T-cell (primary cell): ENCODE measurements at regions of chr21 and their contacts with region 1.

Region 1: DNA sequence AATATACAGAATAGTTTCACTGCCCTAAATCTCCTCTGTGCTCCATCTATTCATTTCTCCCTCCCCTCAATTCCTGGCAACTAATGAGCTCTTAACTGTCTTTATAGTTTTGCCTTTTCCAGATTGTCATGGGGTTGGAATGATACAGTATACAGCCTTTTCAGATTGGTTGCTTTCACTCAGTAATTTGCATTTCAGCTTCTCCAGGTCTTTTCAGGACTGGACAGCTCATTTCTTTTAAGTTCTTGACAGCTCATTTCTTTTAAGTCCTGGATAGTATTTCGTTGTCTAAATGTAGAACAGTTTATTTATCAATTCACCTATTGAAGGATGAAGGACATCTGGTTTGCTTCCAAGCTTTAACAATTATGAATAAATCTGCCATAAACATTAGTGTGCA is 22.6 kb downstream of the KRTAP21-3 start:
- DNase-seq: no peak
- ATAC-seq: no peak
- H3K4me3 ChIP-seq: no peak overlapping the region
- H3K4me3 Mint-ChIP-seq: no peak overlapping the region
- H3K27ac ChIP-seq: no peak overlapping the region
- H3K27ac Mint-ChIP-seq: no peak overlapping the region
- H3K4me1 ChIP-seq: no peaks in the 10 kb centered on the region
- H3K4me1 Mint-ChIP-seq: no peaks in the 10 kb centered on the region
- H3K27me3 ChIP-seq: no peaks in the 10 kb centered on the region
- H3K27me3 Mint-ChIP-seq: no peaks in the 10 kb centered on the region

Region 2: DNA sequence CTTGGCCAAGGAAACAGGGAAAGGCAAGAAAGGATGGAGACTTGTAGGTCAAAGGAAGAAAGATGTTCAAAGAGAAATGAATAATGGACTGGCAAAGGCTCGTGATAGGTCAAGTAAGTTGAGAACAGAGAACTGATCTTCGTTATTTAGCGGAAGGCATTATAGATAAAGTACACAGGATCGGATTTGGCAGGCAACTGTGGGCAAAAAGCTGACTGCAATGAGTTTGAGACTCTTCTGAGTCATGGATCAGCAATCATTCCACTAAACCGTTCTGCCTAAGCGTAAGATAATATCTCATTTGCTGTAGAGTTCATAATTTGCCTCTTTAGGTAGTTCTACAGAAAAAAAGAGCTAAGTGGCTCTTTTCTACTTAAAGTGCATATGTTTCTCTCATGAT is 11.4 kb before region 1 on chr21:
- CTCF ChIA-PET with region 1: no interaction called
- POLR2A ChIA-PET with region 1: interaction called in 1 of 2 experiments, 10 read pairs
- DNase-seq: no peak
- ATAC-seq: no peak
- H3K4me3 ChIP-seq: no peak overlapping the region
- H3K4me3 Mint-ChIP-seq: no peak overlapping the region
- H3K27ac ChIP-seq: no peak overlapping the region
- H3K27ac Mint-ChIP-seq: no peak overlapping the region
- H3K4me1 ChIP-seq: no peaks in the 10 kb centered on the region
- H3K4me1 Mint-ChIP-seq: no peaks in the 10 kb centered on the region
- H3K27me3 ChIP-seq: no peaks in the 10 kb centered on the region
- H3K27me3 Mint-ChIP-seq: no peaks in the 10 kb centered on the region